ENCODE measurements at regions of chr16 and their contacts with region 1.

Region 1: GRCh38 chr16:30534368-30535105 is at the start of gene ZNF747:
- DNase-seq: no peak
- H3K4me3 ChIP-seq: peak within 1 kb of the TSS; percentile 69
- H3K27ac ChIP-seq: peak within 1 kb of the TSS; percentile 65
- H3K27me3 ChIP-seq: no peaks in the 10 kb centered on the region
- CTCF ChIP-seq: no peak
- polyA plus RNA-seq, gene ZNF747: 4.9 and 5.0 TPM in 2 replicates

Region 2: GRCh38 chr16:30395155-30395991 is 139.2 kb before region 1 on chr16 and contains the start of gene ZNF48:
- CTCF ChIA-PET with region 1: no interaction called
- POLR2A ChIA-PET with region 1: interaction called, 10 read pairs
- DNase-seq: peak; percentile 63
- H3K4me3 ChIP-seq: peak within 1 kb of the TSS; percentile 79
- H3K27ac ChIP-seq: peak within 1 kb of the TSS; percentile 91
- H3K27me3 ChIP-seq: no peaks in the 10 kb centered on the region
- CTCF ChIP-seq: 0 out of 2 replicates have a peak, but pooled peaks have one; percentile 11
- polyA plus RNA-seq, gene ZNF48: 4.3 and 5.3 TPM in 2 replicates

Region 3: GRCh38 chr16:30609926-30610839 is 75.6 kb after region 1 on chr16 and contains the start of gene ZNF689:
- CTCF ChIA-PET with region 1: interaction called, 14 read pairs
- POLR2A ChIA-PET with region 1: interaction called, 6 read pairs
- DNase-seq: peak; percentile 92
- H3K4me3 ChIP-seq: peak within 1 kb of the TSS; percentile 78
- H3K27ac ChIP-seq: peak within 1 kb of the TSS; percentile 70
- H3K27me3 ChIP-seq: no peaks in the 10 kb centered on the region
- CTCF ChIP-seq: no peak
- polyA plus RNA-seq, gene ZNF689: 4.0 and 4.2 TPM in 2 replicates

Region 4: GRCh38 chr16:30628627-30629540 is 94.3 kb after region 1 on chr16:
- CTCF ChIA-PET with region 1: interaction called, 14 read pairs
- POLR2A ChIA-PET with region 1: no interaction called
- DNase-seq: peak; percentile 43
- H3K4me3 ChIP-seq: no peak overlapping the region
- H3K27ac ChIP-seq: no peak overlapping the region
- H3K27me3 ChIP-seq: peaks cover 5% of the 10 kb centered on the region
- CTCF ChIP-seq: peak; percentile 94

Measured in AG04450 (cell line).